ENCODE measurements at regions of chr2 and their contacts with region 1.

Region 1: GRCh38 chr2:79860228-79861058 is 347.6 kb downstream of the CTNNA2 start:
- DNase-seq: peak; percentile 53
- ATAC-seq: peak; percentile 98
- H3K4me3 ChIP-seq: no peak overlapping the region
- H3K27ac ChIP-seq: no peak overlapping the region
- H3K4me1 ChIP-seq: no peaks in the 10 kb centered on the region
- H3K27me3 ChIP-seq: no peaks in the 10 kb centered on the region
- CTCF ChIP-seq: peak; percentile 72
- EP300 ChIP-seq: no peak
- POLR2A ChIP-seq: no peak
- RAD21 ChIP-seq: peak; percentile 73

Region 2: GRCh38 chr2:79041032-79041448 is 819.4 kb before region 1 on chr2:
- CTCF ChIA-PET with region 1: no interaction called
- POLR2A ChIA-PET with region 1: no interaction called
- in situ Hi-C with region 1: loop called (anchors 10 kb)
- intact Hi-C with region 1: loop called (anchors 1 kb)
- DNase-seq: peak; percentile 15
- ATAC-seq: peak; percentile 93
- H3K4me3 ChIP-seq: no peak overlapping the region
- H3K27ac ChIP-seq: no peak overlapping the region
- H3K4me1 ChIP-seq: no peaks in the 10 kb centered on the region
- H3K27me3 ChIP-seq: no peaks in the 10 kb centered on the region
- CTCF ChIP-seq: peak; percentile 58
- EP300 ChIP-seq: no peak
- POLR2A ChIP-seq: no peak
- RAD21 ChIP-seq: no peak

Region 3: DNA sequence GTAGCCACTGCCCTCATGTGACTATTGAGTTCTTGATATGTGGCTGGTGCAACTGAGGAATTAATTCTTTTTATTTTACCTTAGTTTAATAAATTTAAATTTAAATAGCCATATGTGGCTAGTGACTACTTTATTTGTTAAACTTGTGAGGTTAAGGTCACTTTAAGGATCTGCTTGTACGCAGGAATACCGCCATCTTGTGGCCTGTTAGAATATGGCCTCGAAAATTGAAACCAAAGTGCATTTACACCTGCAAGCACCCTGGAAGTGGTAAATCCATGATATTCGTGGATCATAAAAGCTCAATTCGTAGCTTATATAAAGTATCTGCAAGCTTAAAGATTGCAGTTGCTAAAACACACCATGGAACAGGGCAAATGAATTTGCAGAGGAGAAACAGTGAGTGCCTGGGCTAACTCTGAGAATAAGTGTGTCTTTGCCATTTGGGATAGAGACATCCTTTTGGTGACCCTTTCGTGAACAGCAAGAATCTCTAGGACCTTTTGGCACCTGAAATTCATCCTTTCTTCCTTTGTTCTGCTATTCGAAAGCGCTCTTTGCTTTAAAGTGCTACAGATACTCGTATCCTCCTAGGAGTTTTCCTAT is 641.0 kb before region 1 on chr2:
- CTCF ChIA-PET with region 1: no interaction called
- POLR2A ChIA-PET with region 1: no interaction called
- in situ Hi-C with region 1: loop called (anchors 5 kb)
- intact Hi-C with region 1: no loop called
- DNase-seq: peak; percentile 55
- ATAC-seq: peak; percentile 79
- H3K4me3 ChIP-seq: no peak overlapping the region
- H3K27ac ChIP-seq: no peak overlapping the region
- H3K4me1 ChIP-seq: no peaks in the 10 kb centered on the region
- H3K27me3 ChIP-seq: no peaks in the 10 kb centered on the region
- CTCF ChIP-seq: peak; percentile 80
- EP300 ChIP-seq: no peak
- POLR2A ChIP-seq: no peak
- RAD21 ChIP-seq: peak; percentile 54; the same call in 1 of the 2 replicates

Region 4: GRCh38 chr2:79530443-79530842 is 330.0 kb before region 1 on chr2:
- CTCF ChIA-PET with region 1: no interaction called
- POLR2A ChIA-PET with region 1: no interaction called
- in situ Hi-C with region 1: no loop called
- intact Hi-C with region 1: loop called (anchors 1 kb)
- DNase-seq: peak; percentile 20
- ATAC-seq: peak; percentile 90
- H3K4me3 ChIP-seq: no peak overlapping the region
- H3K27ac ChIP-seq: no peak overlapping the region
- H3K4me1 ChIP-seq: no peaks in the 10 kb centered on the region
- H3K27me3 ChIP-seq: no peaks in the 10 kb centered on the region
- CTCF ChIP-seq: peak; percentile 46
- EP300 ChIP-seq: no peak
- POLR2A ChIP-seq: no peak
- RAD21 ChIP-seq: no peak

Region 5: DNA sequence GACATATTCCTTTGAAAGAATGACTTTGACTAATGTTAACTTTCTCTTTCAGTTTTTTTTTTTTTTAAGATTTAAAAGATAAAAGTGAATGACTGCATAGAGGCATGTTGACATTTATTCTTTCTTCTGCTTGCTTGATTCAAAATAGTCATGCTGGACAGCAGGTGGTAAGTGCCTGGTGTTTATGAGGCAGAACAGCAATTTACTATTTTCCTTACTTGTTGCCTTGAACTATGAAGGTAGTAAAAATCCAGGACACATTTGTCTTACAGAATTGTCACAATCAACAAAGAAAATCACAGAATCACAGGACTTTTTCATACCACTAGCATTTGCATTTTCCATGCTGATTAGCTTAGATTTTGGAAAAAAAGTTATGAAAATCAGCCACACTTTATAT is 40.7 kb after region 1 on chr2:
- CTCF ChIA-PET with region 1: no interaction called
- POLR2A ChIA-PET with region 1: no interaction called
- in situ Hi-C with region 1: no loop called
- intact Hi-C with region 1: loop called (anchors 2 kb)
- DNase-seq: no peak
- ATAC-seq: no peak
- H3K4me3 ChIP-seq: no peak overlapping the region
- H3K27ac ChIP-seq: no peak overlapping the region
- H3K4me1 ChIP-seq: no peaks in the 10 kb centered on the region
- H3K27me3 ChIP-seq: peaks cover 0 to 13% of the 10 kb centered on the region in 2 experiments; a peak in 2 of 5 replicates
- CTCF ChIP-seq: no peak
- EP300 ChIP-seq: no peak
- POLR2A ChIP-seq: no peak
- RAD21 ChIP-seq: no peak

Measured in HepG2 (cell line).